H1 (cell line): ENCODE measurements at regions of chr14 and their contacts with region 1.

Region 1: GRCh38 chr14:39432179-39432618 is at the start of gene FBXO33:
- DNase-seq: peak; percentile 86 to 96
- H3K4me3 ChIP-seq: peak within 1 kb of the TSS; percentile 69 to 98 (median 94)
- H3K27ac ChIP-seq: peak within 1 kb of the TSS; percentile 100
- H3K4me1 ChIP-seq: no peaks in the 10 kb centered on the region; a peak in 1 of 7 replicates
- H3K27me3 ChIP-seq: no peaks in the 10 kb centered on the region
- CTCF ChIP-seq: no peak
- EP300 ChIP-seq: peak in 1 of 2 experiments; percentile 99; a peak in 2 of 3 replicates
- POLR2A ChIP-seq: 0 out of 3 replicates have a peak, but pooled peaks of 1 of the 2 experiments have one; percentile 5
- RAD21 ChIP-seq: no peak
- total RNA-seq, gene FBXO33: 10.8 and 11.5 TPM in 2 replicates

Region 2: GRCh38 chr14:39090548-39091111 is 341.6 kb before region 1 on chr14:
- CTCF ChIA-PET with region 1: no interaction called
- POLR2A ChIA-PET with region 1: no interaction called
- DNase-seq: no peak
- H3K4me3 ChIP-seq: no peak overlapping the region
- H3K27ac ChIP-seq: no peak overlapping the region
- H3K4me1 ChIP-seq: no peaks in the 10 kb centered on the region
- H3K27me3 ChIP-seq: no peaks in the 10 kb centered on the region
- CTCF ChIP-seq: no peak
- EP300 ChIP-seq: no peak
- POLR2A ChIP-seq: no peak
- RAD21 ChIP-seq: no peak

Region 3: DNA sequence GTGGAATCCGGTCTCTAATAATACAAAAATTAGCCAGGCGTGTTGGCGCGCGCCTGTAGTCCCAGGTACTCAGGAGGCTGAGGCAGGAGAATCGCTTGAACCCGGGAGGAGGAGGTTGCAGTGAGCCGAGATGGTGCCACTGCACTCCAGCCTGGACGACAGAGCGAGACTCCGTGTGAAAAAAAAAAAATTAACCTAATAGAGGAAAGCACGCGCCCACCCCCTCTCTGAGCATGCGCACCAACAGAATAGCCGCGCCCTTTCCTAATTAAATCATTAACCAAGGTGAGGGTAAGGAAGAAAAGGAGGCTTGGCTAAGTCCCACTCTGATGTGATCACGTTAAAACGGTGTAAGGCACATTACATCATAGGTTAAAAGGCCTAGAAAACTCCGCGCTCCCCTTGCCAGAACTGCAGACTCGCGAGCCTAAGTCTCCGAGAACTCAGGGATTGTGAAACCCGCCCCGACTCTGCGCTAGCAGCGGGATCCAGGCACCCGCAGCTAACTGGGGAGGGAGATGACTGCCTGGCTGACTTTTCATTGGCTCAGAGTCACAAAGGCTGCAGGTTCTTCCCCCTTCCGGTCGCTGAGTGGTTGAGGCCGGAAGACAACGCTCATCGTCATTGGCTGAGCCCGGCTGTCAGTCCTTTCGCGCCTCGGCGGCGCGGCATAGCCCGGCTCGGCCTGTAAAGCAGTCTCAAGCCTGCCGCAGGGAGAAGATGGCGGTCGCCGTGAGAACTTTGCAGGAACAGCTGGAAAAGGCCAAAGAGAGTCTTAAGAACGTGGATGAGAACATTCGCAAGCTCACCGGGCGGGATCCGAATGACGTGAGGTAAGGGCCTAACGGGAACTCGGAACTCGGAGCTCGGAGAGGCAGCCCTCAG is 257.4 kb before region 1 on chr14 and contains the start of gene PNN:
- CTCF ChIA-PET with region 1: no interaction called
- POLR2A ChIA-PET with region 1: interaction called, 13 read pairs
- DNase-seq: peak; percentile 91 to 97
- H3K4me3 ChIP-seq: peak within 1 kb of the TSS; percentile 88 to 97 (median 94)
- H3K27ac ChIP-seq: peak within 1 kb of the TSS; percentile 95
- H3K4me1 ChIP-seq: peaks cover 3 to 6% (median 5%) of the 10 kb centered on the region in 4 experiments; a peak in 6 of 7 replicates
- H3K27me3 ChIP-seq: no peaks in the 10 kb centered on the region
- CTCF ChIP-seq: no peak
- EP300 ChIP-seq: peak in 1 of 2 experiments; percentile 98; a peak in 2 of 3 replicates
- POLR2A ChIP-seq: peak; percentile 96 to 99
- RAD21 ChIP-seq: no peak
- total RNA-seq, gene PNN: 113 and 121 TPM in 2 replicates

Region 4: DNA sequence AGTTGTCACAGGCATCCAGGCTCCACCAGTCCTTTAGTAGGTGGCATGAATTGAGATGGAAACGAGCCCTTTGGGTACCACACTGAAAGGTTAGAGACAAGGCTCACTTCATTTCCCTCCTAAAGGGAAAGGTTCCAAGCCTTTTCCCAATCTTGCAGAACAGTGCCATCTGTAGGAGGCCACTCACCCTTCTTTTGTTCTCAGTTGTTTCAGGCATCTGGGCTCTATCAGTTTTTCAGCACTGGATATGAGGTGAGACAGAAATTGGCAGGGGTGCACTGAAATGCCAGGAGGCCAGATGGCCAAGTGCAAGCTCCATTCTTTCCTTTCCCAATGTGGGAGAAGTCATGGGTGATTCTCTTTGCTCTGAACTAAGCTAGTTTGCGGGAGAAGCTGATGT is 15.2 kb before region 1 on chr14:
- CTCF ChIA-PET with region 1: interaction called, 4 read pairs
- POLR2A ChIA-PET with region 1: interaction called, 24 read pairs
- DNase-seq: no peak
- H3K4me3 ChIP-seq: no peak overlapping the region
- H3K27ac ChIP-seq: no peak overlapping the region
- H3K4me1 ChIP-seq: 0 out of 7 replicates have a peak, but pooled peaks cover 0 to 1% (median 0%) of the 10 kb centered on the region in 4 experiments
- H3K27me3 ChIP-seq: no peaks in the 10 kb centered on the region
- CTCF ChIP-seq: peak in 2 of 3 experiments; percentile 36 to 62; a peak in 2 of 4 replicates
- EP300 ChIP-seq: no peak
- POLR2A ChIP-seq: no peak
- RAD21 ChIP-seq: peak; percentile 65 to 76

Region 5: GRCh38 chr14:39442293-39442692 is 10.1 kb after region 1 on chr14:
- CTCF ChIA-PET with region 1: interaction called, 8 read pairs
- POLR2A ChIA-PET with region 1: interaction called, 22 read pairs
- DNase-seq: no peak
- H3K4me3 ChIP-seq: no peak overlapping the region
- H3K27ac ChIP-seq: no peak overlapping the region
- H3K4me1 ChIP-seq: no peaks in the 10 kb centered on the region
- H3K27me3 ChIP-seq: no peaks in the 10 kb centered on the region
- CTCF ChIP-seq: no peak
- EP300 ChIP-seq: no peak
- POLR2A ChIP-seq: no peak
- RAD21 ChIP-seq: no peak

Region 6: GRCh38 chr14:39641224-39641623 is 209.0 kb after region 1 on chr14:
- CTCF ChIA-PET with region 1: no interaction called
- POLR2A ChIA-PET with region 1: no interaction called
- DNase-seq: no peak
- H3K4me3 ChIP-seq: no peak overlapping the region
- H3K27ac ChIP-seq: no peak overlapping the region
- H3K4me1 ChIP-seq: no peaks in the 10 kb centered on the region
- H3K27me3 ChIP-seq: no peaks in the 10 kb centered on the region
- CTCF ChIP-seq: no peak
- EP300 ChIP-seq: no peak
- POLR2A ChIP-seq: no peak
- RAD21 ChIP-seq: no peak